Activated T-helper 1 cell treated with anti-CD3 and anti-CD28 coated beads, Interleukin-12 subunit alpha, Interleukin-12 subunit beta, Interleukin-2, Interleukin-4 antibody, amounts not matched to agents 30 ng/mL and 10 ng/mL and 1 ng/mL, durations not matched to agents 14 hours and 24 hours and 36 hours (primary cell): ENCODE measurements at regions of chr1 and their contacts with region 1.

Region 1: GRCh38 chr1:119140177-119141019 is at the start of gene WARS2:
- DNase-seq: peak; percentile 92
- H3K4me3 Mint-ChIP-seq: no peak within 1 kb of the TSS
- H3K27ac Mint-ChIP-seq: no peak within 1 kb of the TSS
- H3K4me1 Mint-ChIP-seq: peaks cover 41% of the 10 kb centered on the region
- H3K27me3 Mint-ChIP-seq: no peaks in the 10 kb centered on the region
- total RNA-seq, gene WARS2: 20.6 TPM in 2 replicates

Region 2: DNA sequence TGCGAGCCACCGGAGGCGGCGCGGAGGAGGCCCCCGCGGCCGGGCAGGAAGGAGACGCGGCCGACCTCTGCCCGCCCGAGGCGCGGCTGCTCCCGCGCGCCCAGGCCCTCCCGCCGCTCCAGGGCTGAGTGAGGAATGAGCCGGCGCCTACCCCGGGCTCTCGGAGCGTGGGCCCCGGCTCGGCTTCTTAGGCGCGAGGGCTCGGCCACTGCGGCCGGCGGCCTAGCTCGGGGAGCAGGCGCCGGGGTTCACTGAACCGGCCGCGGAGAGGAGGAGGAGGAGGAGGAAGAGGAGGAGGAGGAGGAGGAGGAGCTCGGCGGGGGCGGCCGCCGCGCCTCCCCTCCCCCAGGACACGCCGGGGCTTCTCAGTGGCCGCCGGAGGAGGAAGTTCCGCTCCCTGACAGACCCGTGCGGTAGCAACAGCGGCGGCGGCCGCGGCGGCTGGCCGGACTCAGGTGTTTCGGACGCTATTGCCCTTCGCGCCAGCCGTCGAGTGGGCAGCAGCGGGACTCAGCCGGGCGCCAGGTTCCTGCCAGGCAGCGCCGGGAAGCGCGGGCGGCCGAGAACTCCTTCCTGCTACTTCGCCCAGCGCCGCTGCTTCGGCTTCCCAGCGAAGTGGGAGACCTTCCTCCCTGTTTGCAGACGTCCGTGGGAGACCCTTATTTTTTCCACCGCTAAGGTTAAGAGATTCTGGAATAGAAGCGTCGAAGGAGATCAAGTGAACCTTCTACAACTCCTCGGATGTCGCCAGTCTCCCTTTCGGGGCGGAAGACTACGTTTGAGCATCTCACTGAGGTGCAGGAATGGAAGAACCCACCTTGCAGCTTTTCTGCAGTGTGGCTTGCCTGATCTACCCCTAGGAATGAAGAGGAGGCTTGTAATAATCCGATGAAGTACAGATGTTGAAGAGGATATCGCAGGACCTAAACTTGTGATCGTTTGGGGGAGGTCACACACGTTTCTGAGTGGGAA is 1773.1 kb before region 1 on chr1 and contains the start of gene MAN1A2:
- intact Hi-C with region 1: loop called (anchors 10 kb)
- DNase-seq: peak; percentile 74
- H3K4me3 Mint-ChIP-seq: peak within 1 kb of the TSS; percentile 97
- H3K27ac Mint-ChIP-seq: peak within 1 kb of the TSS; percentile 88
- H3K4me1 Mint-ChIP-seq: peaks cover 60% of the 10 kb centered on the region
- H3K27me3 Mint-ChIP-seq: no peaks in the 10 kb centered on the region
- total RNA-seq, gene MAN1A2: 30.1 and 32.5 TPM in 2 replicates

Region 3: DNA sequence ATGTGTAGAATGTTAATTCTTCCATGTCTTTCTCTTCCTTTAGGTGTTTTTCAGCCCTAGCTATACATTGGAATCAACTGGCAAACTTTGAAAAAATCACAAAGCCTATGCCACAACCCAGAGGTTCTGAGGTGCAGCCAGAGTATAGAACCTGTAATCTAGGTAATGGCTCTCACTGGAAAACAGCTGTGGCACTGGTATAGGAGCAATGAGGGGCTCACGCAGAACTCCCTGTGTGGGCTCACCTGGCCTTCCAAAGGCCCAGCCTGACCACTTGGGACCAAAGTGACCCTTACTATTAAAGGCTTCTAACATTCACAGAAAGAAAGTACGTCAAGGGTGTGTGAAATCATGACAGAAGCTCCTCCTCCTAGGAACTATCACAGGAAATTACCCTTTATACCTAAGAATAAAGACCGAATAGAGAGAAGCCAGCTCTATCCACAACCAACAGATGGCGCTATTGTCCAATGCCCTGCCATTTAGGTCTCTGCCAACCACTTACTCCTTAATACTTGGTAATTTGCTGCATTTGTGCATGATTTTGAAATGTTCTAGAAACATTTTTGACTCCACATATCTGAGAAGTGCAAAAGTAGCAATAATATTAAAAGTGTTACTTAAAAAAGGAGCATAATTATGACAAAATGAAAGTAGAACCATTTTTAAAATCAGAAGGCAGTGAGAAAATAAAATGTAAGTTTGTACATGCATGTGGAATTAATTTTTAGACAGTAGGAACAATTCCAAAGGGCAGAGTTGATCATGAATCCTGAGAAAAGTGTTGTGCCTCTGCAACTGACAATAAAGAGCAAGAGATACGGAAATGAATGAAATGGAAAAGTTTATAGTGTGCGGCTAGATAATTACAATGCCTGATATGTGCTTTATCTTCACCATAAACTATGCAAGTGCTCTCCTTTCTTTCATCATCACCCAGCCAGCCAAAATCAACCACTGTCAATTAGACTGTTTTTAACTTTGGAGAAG is 135.0 kb after region 1 on chr1:
- intact Hi-C with region 1: loop called (anchors 10 kb)
- DNase-seq: peak; percentile 11
- H3K4me3 Mint-ChIP-seq: no peak overlapping the region
- H3K27ac Mint-ChIP-seq: no peak overlapping the region
- H3K4me1 Mint-ChIP-seq: no peaks in the 10 kb centered on the region
- H3K27me3 Mint-ChIP-seq: peaks cover 11% of the 10 kb centered on the region

Region 4: GRCh38 chr1:119662034-119662437 is 521.6 kb after region 1 on chr1:
- intact Hi-C with region 1: loop called (anchors 5 kb)
- DNase-seq: no peak
- H3K4me3 Mint-ChIP-seq: no peak overlapping the region
- H3K27ac Mint-ChIP-seq: no peak overlapping the region
- H3K4me1 Mint-ChIP-seq: peaks cover 12% of the 10 kb centered on the region
- H3K27me3 Mint-ChIP-seq: peaks cover 21% of the 10 kb centered on the region

Region 5: GRCh38 chr1:119711804-119712341 is 571.5 kb after region 1 on chr1 and contains the start of gene PHGDH:
- intact Hi-C with region 1: loop called (anchors 5 kb)
- DNase-seq: peak; percentile 59
- H3K4me3 Mint-ChIP-seq: peak within 1 kb of the TSS; percentile 94
- H3K27ac Mint-ChIP-seq: peak within 1 kb of the TSS; percentile 80
- H3K4me1 Mint-ChIP-seq: peaks cover 42% of the 10 kb centered on the region
- H3K27me3 Mint-ChIP-seq: peaks cover 30% of the 10 kb centered on the region
- total RNA-seq, gene PHGDH: 46.7 and 49.3 TPM in 2 replicates